ENCODE measurements at regions of chr11 and their contacts with region 1.

Region 1: GRCh38 chr11:63445720-63446119 is 45.2 kb downstream of the PLAAT5 start:
- DNase-seq: no peak
- H3K4me3 ChIP-seq: no peak overlapping the region
- CTCF ChIP-seq: no peak

Region 2: DNA sequence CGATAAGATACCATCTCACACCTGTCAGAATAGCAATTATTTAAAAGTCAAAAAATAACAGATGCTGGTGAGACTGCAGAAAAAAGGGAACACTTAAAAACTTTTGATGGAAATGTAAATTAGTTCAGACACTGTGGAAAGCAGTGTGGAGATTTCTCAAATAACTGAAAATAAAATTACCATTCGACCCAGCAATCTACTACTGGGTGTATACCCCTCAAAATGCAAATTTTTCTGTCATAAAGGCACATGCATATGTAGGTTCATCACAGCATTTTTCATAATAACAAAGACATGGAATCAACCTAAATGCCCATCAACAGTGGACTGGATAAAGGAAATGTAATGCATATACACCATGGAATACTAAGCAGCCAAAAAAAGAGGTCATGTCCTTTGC is 65.6 kb before region 1 on chr11:
- in situ Hi-C with region 1: loop called (anchors 10 kb)
- DNase-seq: no peak
- H3K4me3 ChIP-seq: no peak overlapping the region
- CTCF ChIP-seq: no peak

Region 3: GRCh38 chr11:63508009-63508408 is 62.3 kb after region 1 on chr11:
- in situ Hi-C with region 1: no loop called
- DNase-seq: no peak
- H3K4me3 ChIP-seq: no peak overlapping the region
- CTCF ChIP-seq: no peak

Region 4: DNA sequence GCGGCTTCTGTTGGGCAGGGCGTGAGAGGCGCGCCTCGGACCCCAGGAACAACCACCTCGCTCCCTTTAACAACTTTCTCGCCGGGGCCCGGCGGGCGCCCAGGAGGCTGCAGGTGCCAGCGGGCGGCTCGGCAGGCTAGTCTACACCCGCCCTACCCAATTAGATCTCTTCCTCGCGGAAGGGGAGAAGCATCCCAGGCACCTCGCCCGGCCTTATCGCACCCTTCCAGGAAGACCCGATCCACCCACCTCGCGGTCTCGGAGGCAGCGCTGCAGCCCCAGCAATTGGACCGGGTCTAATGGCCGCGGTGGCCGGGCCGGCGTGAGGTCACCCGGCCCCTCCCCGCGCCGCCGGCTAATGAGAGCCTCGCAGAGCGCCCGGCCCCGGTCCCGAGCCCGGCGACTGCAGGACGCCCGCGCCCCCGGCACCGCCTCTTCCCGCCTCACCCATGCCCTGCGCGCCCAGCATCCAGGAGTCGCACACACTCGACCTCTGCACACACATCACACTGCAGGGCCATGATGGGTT is 168.5 kb after region 1 on chr11 and contains the start of gene PLAAT3:
- in situ Hi-C with region 1: no loop called
- DNase-seq: no peak
- H3K4me3 ChIP-seq: peak within 1 kb of the TSS; percentile 75
- CTCF ChIP-seq: no peak